Activated CD4-positive, alpha-beta T cell treated with anti-CD3 and anti-CD28 coated beads for 36 hours (primary cell): ENCODE measurements at regions of chr21 and their contacts with region 1.

Region 1: DNA sequence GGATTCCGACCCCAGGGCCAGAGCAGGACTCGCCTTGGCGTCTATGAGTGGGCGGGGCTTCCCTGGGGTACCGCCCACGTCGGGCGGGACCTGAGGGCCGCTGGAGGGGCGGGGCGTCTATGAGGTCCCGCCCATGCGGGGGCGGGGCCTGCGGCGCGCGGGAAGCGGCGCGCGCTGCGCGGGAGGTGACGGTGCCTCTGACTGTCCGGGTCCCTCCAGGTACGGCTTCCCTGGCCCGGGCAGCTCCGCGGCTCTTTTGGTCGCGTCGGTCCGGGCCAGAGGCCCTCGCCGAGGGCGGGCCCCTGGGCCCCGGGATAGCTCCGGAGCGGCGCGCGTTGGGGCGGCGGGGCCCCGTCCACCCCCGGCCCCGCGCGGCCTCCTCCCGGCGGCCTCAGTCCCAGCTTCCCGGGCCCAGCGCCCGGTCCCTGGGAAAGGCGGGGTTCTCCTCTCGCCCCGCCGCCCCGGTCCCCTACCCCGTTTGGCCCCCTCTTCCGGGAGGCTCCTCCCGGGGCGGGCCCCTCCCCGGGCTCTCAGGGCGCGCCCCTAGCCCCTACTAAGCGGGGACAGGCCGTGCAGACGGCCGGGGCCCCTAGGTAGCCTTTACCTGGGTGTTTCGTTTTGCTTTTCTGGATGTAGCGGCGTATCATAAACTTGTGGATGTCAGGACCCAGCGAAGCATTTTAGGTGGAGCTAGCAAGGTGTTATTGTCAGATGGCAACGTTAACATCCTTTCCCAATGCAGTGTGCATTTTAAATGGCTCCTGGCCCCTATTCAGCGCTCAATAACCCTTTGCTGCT is at the start of gene CHAF1B:
- DNase-seq: peak; percentile 91
- ATAC-seq: peak; percentile 96
- H3K4me3 Mint-ChIP-seq: peak within 1 kb of the TSS; percentile 81
- H3K27ac Mint-ChIP-seq: peak within 1 kb of the TSS; percentile 83
- H3K4me1 Mint-ChIP-seq: peaks cover 17% of the 10 kb centered on the region
- H3K27me3 Mint-ChIP-seq: no peaks in the 10 kb centered on the region
- total RNA-seq, gene CHAF1B: 33.2 to 36.3 TPM

Region 2: DNA sequence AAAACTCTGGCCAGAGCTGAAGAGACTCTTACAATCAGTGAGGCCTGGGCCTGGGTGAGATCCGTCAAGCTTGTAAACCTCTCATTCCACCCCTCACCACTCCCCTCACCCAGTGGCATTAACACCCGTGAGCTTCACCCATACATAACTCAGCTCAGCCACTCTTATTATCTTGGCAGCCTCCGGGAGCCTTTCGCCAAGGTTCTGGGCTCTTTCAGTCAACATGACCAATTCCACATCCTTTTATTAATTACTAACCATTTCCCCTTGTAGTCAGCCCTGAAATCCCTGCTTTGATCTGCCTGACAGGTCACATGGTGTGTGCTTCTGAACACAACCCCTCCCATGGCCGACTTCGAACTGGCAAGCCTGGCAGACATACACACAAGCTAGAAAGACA is 459.9 kb before region 1 on chr21:
- CTCF ChIA-PET with region 1: no interaction called
- POLR2A ChIA-PET with region 1: no interaction called
- intact Hi-C with region 1: no loop called
- DNase-seq: peak; percentile 25
- ATAC-seq: peak; percentile 43
- H3K4me3 Mint-ChIP-seq: no peak overlapping the region
- H3K27ac Mint-ChIP-seq: no peak overlapping the region
- H3K4me1 Mint-ChIP-seq: no peaks in the 10 kb centered on the region
- H3K27me3 Mint-ChIP-seq: peaks cover 13% of the 10 kb centered on the region

Region 3: DNA sequence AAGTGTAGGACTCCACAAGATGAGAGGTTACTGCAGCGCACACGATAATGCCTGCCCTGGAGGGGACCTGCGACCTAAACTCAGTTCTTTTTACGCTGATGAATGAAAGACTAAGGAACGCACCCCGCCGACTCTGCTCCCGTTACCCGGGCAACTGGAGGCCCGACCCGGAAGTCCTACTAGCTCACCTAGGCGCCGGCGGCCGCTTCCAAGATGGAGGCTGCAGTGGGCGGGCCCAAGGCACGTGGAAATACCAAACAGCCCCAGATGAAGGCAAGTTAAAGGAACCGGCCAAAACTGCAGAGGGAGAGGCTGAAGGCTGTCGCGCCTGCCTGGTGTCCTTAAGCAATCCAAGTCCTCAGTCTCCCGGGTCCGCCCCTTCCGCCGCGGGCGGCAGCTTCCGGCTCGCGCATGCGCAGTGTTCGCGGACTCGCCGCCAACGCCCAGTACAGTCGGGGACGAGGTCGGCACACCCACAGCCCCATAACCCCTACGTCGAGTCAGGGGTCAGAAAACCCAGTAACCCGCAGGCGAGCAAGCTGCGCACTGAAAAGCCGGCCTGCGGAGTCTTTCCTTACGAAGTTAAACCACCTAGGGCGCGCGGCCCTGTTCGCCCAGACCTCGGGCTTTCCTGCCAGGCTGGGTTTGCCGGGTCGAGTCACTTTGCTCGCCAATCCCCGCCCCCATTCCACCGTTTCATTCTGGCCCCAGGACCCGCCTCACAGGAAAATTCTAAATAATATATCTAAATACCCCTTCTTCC is 325.1 kb before region 1 on chr21 and contains the start of gene SETD4:
- CTCF ChIA-PET with region 1: no interaction called
- POLR2A ChIA-PET with region 1: no interaction called
- intact Hi-C with region 1: loop called in 1 of 2 experiments (anchors 2 kb)
- DNase-seq: peak; percentile 95
- ATAC-seq: peak; percentile 92
- H3K4me3 Mint-ChIP-seq: peak within 1 kb of the TSS; percentile 89
- H3K27ac Mint-ChIP-seq: peak within 1 kb of the TSS; percentile 92
- H3K4me1 Mint-ChIP-seq: peaks cover 15% of the 10 kb centered on the region
- H3K27me3 Mint-ChIP-seq: no peaks in the 10 kb centered on the region
- total RNA-seq, gene SETD4: 11.0 to 17.6 TPM

Region 4: DNA sequence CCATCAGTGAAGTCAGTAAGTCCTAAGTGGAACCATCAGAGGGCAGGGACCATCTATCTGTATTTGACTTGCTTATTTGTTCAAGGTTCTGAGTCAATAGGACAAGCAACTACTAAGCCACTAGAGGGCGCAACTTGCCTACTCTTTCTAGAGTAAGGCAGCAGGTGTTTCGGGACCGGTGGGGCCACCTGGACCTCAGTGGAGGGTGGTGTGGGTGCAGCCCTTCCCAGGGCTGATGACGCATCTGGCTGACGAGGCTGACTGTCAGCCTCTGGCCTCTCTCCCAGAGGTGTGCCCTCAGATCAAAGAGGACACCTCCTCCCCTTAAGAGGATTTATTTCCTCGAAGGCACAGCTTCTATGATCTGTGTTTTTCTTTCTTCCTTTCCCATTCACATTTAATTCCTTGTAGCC is 243.9 kb before region 1 on chr21:
- CTCF ChIA-PET with region 1: interaction called, 4 read pairs
- POLR2A ChIA-PET with region 1: no interaction called
- intact Hi-C with region 1: loop called in 1 of 2 experiments (anchors 5 kb)
- DNase-seq: peak; percentile 92
- ATAC-seq: peak; percentile 96
- H3K4me3 Mint-ChIP-seq: no peak overlapping the region
- H3K27ac Mint-ChIP-seq: peak overlapping the region; percentile 29
- H3K4me1 Mint-ChIP-seq: peaks cover 25% of the 10 kb centered on the region
- H3K27me3 Mint-ChIP-seq: no peaks in the 10 kb centered on the region

Region 5: GRCh38 chr21:36203617-36203917 is 181.9 kb before region 1 on chr21:
- CTCF ChIA-PET with region 1: no interaction called
- POLR2A ChIA-PET with region 1: no interaction called
- intact Hi-C with region 1: loop called in 1 of 2 experiments (anchors 1 kb)
- DNase-seq: peak; percentile 76
- ATAC-seq: peak; percentile 96
- H3K4me3 Mint-ChIP-seq: no peak overlapping the region
- H3K27ac Mint-ChIP-seq: no peak overlapping the region
- H3K4me1 Mint-ChIP-seq: peaks cover 21% of the 10 kb centered on the region
- H3K27me3 Mint-ChIP-seq: no peaks in the 10 kb centered on the region

Region 6: DNA sequence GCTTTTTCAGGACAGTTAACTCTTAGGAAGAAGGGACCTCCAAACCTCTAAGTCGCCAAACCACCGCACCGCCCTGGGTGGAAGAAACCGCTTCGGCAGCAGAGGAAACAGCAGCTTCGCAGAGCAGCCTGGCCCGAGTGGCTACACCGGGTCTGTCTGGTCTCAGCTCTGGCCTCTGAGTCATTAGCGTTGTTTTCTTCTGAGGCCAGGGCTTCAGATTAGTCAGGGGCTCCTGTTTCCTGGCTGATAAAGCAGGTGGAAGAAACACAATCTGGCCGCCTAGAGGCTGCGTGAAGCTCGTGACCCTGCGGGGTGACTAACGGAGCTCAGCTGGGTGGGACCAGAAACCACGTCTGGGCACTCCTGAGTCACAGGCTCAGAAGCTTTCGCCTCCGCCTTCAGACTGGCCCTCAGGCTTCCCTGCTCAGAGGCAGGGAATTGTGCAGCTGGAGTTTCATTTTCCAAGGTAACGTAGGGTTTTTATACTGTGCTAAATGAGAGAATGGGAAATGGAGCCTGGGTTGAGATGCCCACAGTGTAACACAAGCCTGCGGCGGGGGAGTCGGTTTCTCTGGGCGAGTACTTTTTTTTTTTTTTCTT is 44.6 kb after region 1 on chr21:
- CTCF ChIA-PET with region 1: interaction called, 3 read pairs
- POLR2A ChIA-PET with region 1: no interaction called
- intact Hi-C with region 1: loop called in 1 of 2 experiments (anchors 1 kb)
- DNase-seq: peak; percentile 90
- ATAC-seq: peak; percentile 98
- H3K4me3 Mint-ChIP-seq: peak overlapping the region; percentile 62
- H3K27ac Mint-ChIP-seq: peak overlapping the region; percentile 83
- H3K4me1 Mint-ChIP-seq: peaks cover 14% of the 10 kb centered on the region
- H3K27me3 Mint-ChIP-seq: peaks cover 30% of the 10 kb centered on the region

Region 7: DNA sequence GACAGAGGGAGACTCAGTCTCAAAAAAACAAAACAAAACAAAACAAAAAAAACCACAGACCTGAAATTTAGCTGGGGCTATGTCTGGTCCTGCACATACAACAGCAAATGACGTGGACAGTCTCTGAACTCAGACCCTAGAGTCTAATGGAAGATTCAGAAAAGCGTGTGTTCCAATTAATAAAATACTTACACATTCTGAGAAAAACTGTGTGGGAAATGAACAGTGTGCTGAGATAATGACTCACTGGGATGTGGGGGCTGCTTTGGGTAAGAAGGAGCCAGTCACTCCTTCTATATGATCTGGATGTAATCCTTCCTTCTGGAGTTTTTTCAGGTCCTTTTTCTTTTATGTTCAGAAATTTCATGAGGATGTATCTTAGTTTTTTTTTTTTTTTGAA is 65.1 kb after region 1 on chr21:
- CTCF ChIA-PET with region 1: no interaction called
- POLR2A ChIA-PET with region 1: no interaction called
- intact Hi-C with region 1: no loop called
- DNase-seq: no peak
- ATAC-seq: no peak
- H3K4me3 Mint-ChIP-seq: no peak overlapping the region
- H3K27ac Mint-ChIP-seq: no peak overlapping the region
- H3K4me1 Mint-ChIP-seq: no peaks in the 10 kb centered on the region
- H3K27me3 Mint-ChIP-seq: peaks cover 2% of the 10 kb centered on the region

Region 8: GRCh38 chr21:36471254-36471723 is 85.9 kb after region 1 on chr21:
- CTCF ChIA-PET with region 1: no interaction called
- POLR2A ChIA-PET with region 1: no interaction called
- intact Hi-C with region 1: no loop called
- DNase-seq: peak; percentile 40
- ATAC-seq: peak; percentile 88
- H3K4me3 Mint-ChIP-seq: no peak overlapping the region
- H3K27ac Mint-ChIP-seq: no peak overlapping the region
- H3K4me1 Mint-ChIP-seq: peaks cover 8% of the 10 kb centered on the region
- H3K27me3 Mint-ChIP-seq: no peaks in the 10 kb centered on the region

Region 9: DNA sequence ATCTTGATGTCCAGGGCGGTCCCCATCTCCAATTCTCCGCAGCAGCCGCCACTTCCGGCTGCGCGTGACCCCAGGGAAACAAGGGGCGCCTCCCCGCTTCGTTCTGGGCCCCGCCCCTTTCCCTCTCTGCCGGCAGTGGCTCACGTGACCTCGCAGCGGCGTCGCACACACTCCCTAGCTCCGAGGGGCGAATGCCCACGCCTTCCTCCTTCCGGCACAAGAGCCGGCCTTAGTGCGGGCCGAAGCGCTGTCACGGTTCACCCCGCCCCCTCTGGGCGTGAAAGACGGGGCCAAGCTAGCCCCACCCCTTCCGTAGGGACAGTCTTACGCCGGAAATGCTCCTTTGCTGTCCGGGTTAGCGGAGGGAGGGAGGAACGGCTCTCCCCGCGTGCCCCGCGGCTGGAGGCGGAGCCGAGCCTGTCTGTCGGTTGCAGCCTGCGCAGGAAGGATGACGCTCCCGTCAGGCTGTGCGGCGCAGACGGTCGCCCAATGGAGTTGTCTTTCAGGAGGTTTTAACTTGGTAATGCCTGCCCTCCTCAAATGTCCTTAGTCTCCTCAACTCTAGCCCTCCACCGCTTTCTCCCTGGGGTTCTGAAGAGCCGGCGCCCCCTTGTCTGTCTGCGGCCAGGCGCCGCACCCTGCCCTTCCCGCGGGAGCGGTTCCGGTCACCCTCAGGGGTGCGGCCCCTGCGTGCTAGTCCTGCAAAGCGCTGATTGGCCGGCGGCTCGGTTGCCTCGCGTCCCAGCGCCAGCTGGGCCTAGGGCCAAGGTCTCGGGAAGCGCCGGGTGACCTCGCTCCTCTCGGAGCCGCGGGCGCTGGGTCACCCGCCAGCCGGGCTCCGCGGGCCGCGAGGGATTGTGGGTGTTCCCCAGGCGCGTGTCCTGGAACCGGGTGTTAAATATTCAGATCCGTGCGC is 882.1 kb after region 1 on chr21 and contains the start of gene VPS26C:
- CTCF ChIA-PET with region 1: no interaction called
- POLR2A ChIA-PET with region 1: no interaction called
- intact Hi-C with region 1: loop called in 1 of 2 experiments (anchors 2 kb)
- DNase-seq: peak; percentile 99
- ATAC-seq: peak; percentile 92
- H3K4me3 Mint-ChIP-seq: peak within 1 kb of the TSS; percentile 84
- H3K27ac Mint-ChIP-seq: peak within 1 kb of the TSS; percentile 99
- H3K4me1 Mint-ChIP-seq: peaks cover 28% of the 10 kb centered on the region
- H3K27me3 Mint-ChIP-seq: no peaks in the 10 kb centered on the region
- total RNA-seq, gene VPS26C: 54.8 to 61.7 TPM